ENCODE measurements at regions of chr16 and their contacts with region 1.

Region 1: GRCh38 chr16:11139326-11140097 is 116.5 kb downstream of the SOCS1 start:
- DNase-seq: no peak
- H3K4me3 ChIP-seq: no peak overlapping the region
- H3K4me3 Mint-ChIP-seq: no peak overlapping the region
- H3K27ac ChIP-seq: no peak overlapping the region
- H3K27ac Mint-ChIP-seq: peak overlapping the region in 1 of 7 donors; percentile 14
- H3K4me1 ChIP-seq: peaks cover 14 to 22% of the 10 kb centered on the region in 2 donors
- H3K4me1 Mint-ChIP-seq: peaks cover 38% of the 10 kb centered on the region
- H3K27me3 ChIP-seq: no peaks in the 10 kb centered on the region
- H3K27me3 Mint-ChIP-seq: peaks cover 0 to 4% (median 0%) of the 10 kb centered on the region in 3 donors
- CTCF ChIP-seq: no peak

Region 2: GRCh38 chr16:10981697-10982216 is 157.8 kb before region 1 on chr16:
- intact Hi-C with region 1: loop called in 1 of 2 experiments (anchors 10 kb)
- DNase-seq: no peak
- H3K4me3 ChIP-seq: no peak overlapping the region
- H3K4me3 Mint-ChIP-seq: no peak overlapping the region
- H3K27ac ChIP-seq: no peak overlapping the region
- H3K27ac Mint-ChIP-seq: no peak overlapping the region
- H3K4me1 ChIP-seq: no peaks in the 10 kb centered on the region
- H3K4me1 Mint-ChIP-seq: no peaks in the 10 kb centered on the region
- H3K27me3 ChIP-seq: no peaks in the 10 kb centered on the region
- H3K27me3 Mint-ChIP-seq: peaks cover 0 to 3% (median 0%) of the 10 kb centered on the region in 3 donors
- CTCF ChIP-seq: no peak

Region 3: GRCh38 chr16:11164482-11165270 is 25.2 kb after region 1 on chr16:
- intact Hi-C with region 1: no loop called
- DNase-seq: no peak
- H3K4me3 ChIP-seq: no peak overlapping the region
- H3K4me3 Mint-ChIP-seq: no peak overlapping the region
- H3K27ac ChIP-seq: no peak overlapping the region
- H3K27ac Mint-ChIP-seq: no peak overlapping the region
- H3K4me1 ChIP-seq: no peaks in the 10 kb centered on the region
- H3K4me1 Mint-ChIP-seq: no peaks in the 10 kb centered on the region
- H3K27me3 ChIP-seq: no peaks in the 10 kb centered on the region
- H3K27me3 Mint-ChIP-seq: peaks cover 1 to 4% (median 2%) of the 10 kb centered on the region in 3 donors
- CTCF ChIP-seq: no peak

Measured in CD14-positive monocyte (primary cell).